SK-N-SH (cell line): ENCODE measurements at regions of chr3 and their contacts with region 1.

Region 1: DNA sequence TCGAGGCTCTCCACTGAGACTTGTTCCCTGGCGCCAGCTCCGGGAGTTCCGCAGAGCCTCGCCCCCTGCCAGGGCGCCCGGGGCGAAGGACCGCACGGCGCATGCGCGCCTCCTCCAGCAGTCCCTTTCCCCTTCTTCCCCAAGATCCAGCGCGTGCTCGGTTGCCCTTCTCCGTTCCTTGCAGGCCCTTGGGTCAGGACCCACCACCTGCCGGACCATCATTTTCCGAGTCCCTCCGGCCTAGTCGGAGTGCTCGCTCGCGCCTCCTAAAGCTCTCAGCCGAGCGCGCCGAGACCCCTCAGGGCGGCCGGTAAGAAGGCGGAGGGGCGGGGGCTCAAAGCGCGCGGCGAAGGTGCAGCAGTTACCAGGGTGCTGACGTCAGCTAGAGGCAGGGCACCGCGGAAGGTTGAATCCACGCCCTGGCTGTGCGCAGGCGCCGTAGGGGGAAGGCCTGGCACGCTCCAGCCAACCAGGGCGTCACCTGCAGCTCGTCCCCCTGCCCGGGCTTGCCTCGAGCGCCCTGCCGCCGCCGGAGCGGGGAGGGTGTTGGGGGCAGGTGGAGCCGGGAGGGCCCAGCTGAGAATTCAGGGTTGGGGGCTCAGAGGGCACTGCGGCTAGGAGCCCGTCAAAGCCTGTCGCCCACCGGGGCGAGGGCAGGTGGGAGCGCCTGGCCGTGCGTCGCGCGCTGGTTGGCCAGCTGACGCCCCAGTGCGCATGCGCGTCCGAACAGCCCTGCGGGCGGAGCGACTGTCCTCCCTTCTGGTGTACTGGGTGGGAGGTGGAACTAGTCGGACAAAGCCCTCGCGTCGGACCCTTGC is at the start of gene TCAIM:
- DNase-seq: peak; percentile 97
- H3K4me3 ChIP-seq: peak within 1 kb of the TSS; percentile 83 to 85
- H3K27ac ChIP-seq: peak within 1 kb of the TSS; percentile 72 to 98
- H3K4me1 ChIP-seq: peaks cover 5 to 22% of the 10 kb centered on the region in 2 experiments; a peak in 3 of 4 replicates
- H3K27me3 ChIP-seq: no peaks in the 10 kb centered on the region
- CTCF ChIP-seq: no peak
- EP300 ChIP-seq: peak in 1 of 2 experiments; percentile 61; a peak in 1 of 4 replicates
- RAD21 ChIP-seq: peak; percentile 27; the same call in 1 of the 2 replicates
- polyA plus RNA-seq, gene TCAIM: 8.4 and 12.4 TPM in 2 replicates

Region 2: GRCh38 chr3:44160818-44161217 is 177.4 kb before region 1 on chr3:
- CTCF ChIA-PET with region 1: no interaction called
- POLR2A ChIA-PET with region 1: no interaction called
- DNase-seq: no peak
- H3K4me3 ChIP-seq: no peak overlapping the region
- H3K27ac ChIP-seq: no peak overlapping the region
- H3K4me1 ChIP-seq: no peaks in the 10 kb centered on the region
- H3K27me3 ChIP-seq: no peaks in the 10 kb centered on the region
- CTCF ChIP-seq: no peak
- EP300 ChIP-seq: no peak
- RAD21 ChIP-seq: no peak

Region 3: GRCh38 chr3:44235604-44236484 is 102.4 kb before region 1 on chr3:
- CTCF ChIA-PET with region 1: no interaction called
- POLR2A ChIA-PET with region 1: no interaction called
- DNase-seq: peak; percentile 67
- H3K4me3 ChIP-seq: no peak overlapping the region
- H3K27ac ChIP-seq: no peak overlapping the region
- H3K4me1 ChIP-seq: no peaks in the 10 kb centered on the region; a peak in 1 of 4 replicates
- H3K27me3 ChIP-seq: no peaks in the 10 kb centered on the region
- CTCF ChIP-seq: peak; percentile 81
- EP300 ChIP-seq: no peak
- RAD21 ChIP-seq: peak; percentile 67

Region 4: GRCh38 chr3:44418549-44418948 is 80.3 kb after region 1 on chr3:
- CTCF ChIA-PET with region 1: no interaction called
- POLR2A ChIA-PET with region 1: no interaction called
- DNase-seq: no peak
- H3K4me3 ChIP-seq: no peak overlapping the region
- H3K27ac ChIP-seq: no peak overlapping the region
- H3K4me1 ChIP-seq: peaks cover 0 to 4% of the 10 kb centered on the region in 2 experiments; a peak in 1 of 4 replicates
- H3K27me3 ChIP-seq: no peaks in the 10 kb centered on the region
- CTCF ChIP-seq: peak; percentile 41
- EP300 ChIP-seq: no peak
- RAD21 ChIP-seq: no peak

Region 5: GRCh38 chr3:44439499-44440295 is 101.5 kb after region 1 on chr3:
- CTCF ChIA-PET with region 1: no interaction called
- POLR2A ChIA-PET with region 1: interaction called, 11 read pairs
- DNase-seq: peak; percentile 74
- H3K4me3 ChIP-seq: no peak overlapping the region; a peak in 1 of 4 replicates
- H3K27ac ChIP-seq: peak overlapping the region; percentile 67 to 89
- H3K4me1 ChIP-seq: peaks cover 3 to 28% of the 10 kb centered on the region in 2 experiments; a peak in 2 of 4 replicates
- H3K27me3 ChIP-seq: no peaks in the 10 kb centered on the region
- CTCF ChIP-seq: no peak
- EP300 ChIP-seq: peak in 1 of 2 experiments; percentile 70; a peak in 2 of 4 replicates
- RAD21 ChIP-seq: peak; percentile 36; the same call in 1 of the 2 replicates

Region 6: DNA sequence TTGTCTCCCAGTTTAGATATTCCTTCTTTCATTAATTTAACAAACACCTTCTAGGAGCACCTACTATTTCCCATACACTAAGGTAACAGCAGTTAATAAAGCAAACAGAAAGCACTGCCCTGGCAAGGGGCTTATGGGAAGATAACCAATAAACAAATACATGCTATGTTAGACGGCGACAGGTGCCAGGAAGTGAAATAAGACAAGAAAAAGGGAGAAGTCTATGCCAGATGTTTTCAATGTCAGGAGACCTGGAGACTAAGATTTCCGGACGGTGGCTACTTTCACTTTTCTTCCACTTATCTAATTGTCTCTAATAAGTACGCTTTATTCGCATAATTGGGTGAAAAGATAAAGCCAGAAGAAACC is 171.8 kb after region 1 on chr3:
- CTCF ChIA-PET with region 1: no interaction called
- POLR2A ChIA-PET with region 1: interaction called, 14 read pairs
- DNase-seq: no peak
- H3K4me3 ChIP-seq: peak overlapping the region; percentile 69 to 96
- H3K27ac ChIP-seq: peak overlapping the region; percentile 63 to 72
- H3K4me1 ChIP-seq: peaks cover 0 to 12% of the 10 kb centered on the region in 2 experiments; a peak in 1 of 4 replicates
- H3K27me3 ChIP-seq: no peaks in the 10 kb centered on the region
- CTCF ChIP-seq: no peak
- EP300 ChIP-seq: no peak
- RAD21 ChIP-seq: no peak